ENCODE measurements at regions of chr4 and their contacts with region 1.

Region 1: DNA sequence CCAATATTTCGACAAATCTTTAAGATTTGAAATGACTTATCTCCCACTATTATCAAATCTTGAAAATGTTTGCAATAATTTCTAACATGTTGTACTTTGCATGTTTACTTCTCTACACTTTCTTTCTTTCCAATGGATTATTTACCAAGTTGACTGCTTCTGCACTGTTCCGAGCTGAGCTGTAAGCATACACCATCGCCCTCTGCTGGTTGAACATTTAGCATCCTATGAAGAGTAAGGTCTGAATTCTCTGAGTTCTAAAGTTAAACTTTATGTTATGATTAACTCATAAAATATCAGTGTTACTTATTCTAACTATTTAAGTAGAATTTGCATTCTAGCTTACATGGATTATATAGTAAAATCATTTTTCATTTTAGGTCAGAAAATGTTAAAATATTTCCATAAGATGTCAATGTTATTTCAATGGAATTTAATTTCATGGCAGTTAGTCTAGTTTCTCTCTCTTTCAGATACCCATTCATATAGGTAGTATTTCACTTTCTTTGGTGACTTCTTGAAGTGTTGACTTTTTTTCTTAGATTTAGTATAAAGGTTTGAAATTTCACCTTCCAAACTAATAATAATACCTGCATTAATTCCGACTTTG is 137.4 kb downstream of the DKK2 start:
- DNase-seq: peak; percentile 49
- H3K4me3 Mint-ChIP-seq: no peak overlapping the region
- H3K27ac Mint-ChIP-seq: no peak overlapping the region
- H3K4me1 Mint-ChIP-seq: no peaks in the 10 kb centered on the region
- H3K27me3 Mint-ChIP-seq: no peaks in the 10 kb centered on the region

Region 2: DNA sequence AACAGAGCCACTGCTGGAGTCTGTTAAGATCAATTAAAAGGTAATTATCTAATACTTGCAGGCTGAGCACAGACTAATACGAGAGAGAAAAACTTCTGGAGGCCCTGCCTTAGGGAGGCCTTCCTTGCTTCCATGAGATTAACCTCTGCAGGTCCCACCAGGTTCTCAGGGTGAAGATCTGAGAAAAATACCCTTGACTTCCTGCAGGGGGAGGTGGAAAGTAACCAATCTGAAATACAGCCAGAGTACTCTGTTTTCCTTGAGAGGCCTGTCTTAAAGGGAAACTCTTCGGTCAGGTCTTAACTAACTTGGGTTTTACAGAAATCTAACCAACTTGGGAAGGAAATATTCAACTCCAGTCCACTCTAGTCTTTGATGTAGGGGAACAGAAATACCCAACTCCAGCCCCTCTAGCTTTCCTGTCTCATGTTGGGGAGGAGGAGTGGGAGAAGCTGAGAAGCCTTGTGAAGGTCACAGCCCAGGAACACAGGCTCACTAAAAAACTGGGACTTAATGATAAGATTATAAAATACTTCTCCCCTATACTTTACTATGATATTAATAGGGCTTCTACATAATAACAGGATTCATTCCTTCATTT is 659.8 kb before region 1 on chr4:
- CTCF ChIA-PET with region 1: no interaction called
- intact Hi-C with region 1: loop called (anchors 1 kb)
- DNase-seq: no peak
- H3K4me3 Mint-ChIP-seq: no peak overlapping the region
- H3K27ac Mint-ChIP-seq: no peak overlapping the region
- H3K4me1 Mint-ChIP-seq: no peaks in the 10 kb centered on the region
- H3K27me3 Mint-ChIP-seq: no peaks in the 10 kb centered on the region

Region 3: DNA sequence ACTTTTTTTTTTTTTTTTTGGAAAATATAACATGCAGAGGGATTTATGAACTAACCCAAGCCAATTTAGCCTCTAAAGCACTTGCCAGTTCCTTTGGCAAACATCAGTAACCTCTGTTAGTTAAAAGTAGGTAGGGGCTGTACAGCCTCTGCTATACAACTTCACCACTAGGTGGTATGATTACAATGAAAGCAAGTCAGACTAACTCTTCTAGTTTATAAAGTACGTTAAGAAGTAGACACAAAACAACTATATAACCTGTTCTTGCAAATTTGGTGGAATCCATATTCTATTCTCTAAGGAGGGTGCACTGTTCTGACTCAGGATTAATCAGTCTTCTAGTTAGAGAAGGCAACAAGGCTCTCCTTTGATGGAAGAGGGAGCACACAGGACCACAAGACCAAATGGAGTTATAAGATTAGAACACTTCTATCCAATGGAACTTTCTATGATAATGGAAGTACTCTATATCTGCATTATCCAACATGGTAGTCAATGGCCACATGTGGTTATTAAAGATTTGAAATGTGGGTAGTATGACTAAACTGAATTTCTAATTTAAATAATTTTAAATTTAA is 569.6 kb before region 1 on chr4:
- CTCF ChIA-PET with region 1: no interaction called
- intact Hi-C with region 1: loop called (anchors 1 kb)
- DNase-seq: no peak
- H3K4me3 Mint-ChIP-seq: no peak overlapping the region
- H3K27ac Mint-ChIP-seq: no peak overlapping the region
- H3K4me1 Mint-ChIP-seq: peaks cover 7% of the 10 kb centered on the region
- H3K27me3 Mint-ChIP-seq: no peaks in the 10 kb centered on the region

Region 4: DNA sequence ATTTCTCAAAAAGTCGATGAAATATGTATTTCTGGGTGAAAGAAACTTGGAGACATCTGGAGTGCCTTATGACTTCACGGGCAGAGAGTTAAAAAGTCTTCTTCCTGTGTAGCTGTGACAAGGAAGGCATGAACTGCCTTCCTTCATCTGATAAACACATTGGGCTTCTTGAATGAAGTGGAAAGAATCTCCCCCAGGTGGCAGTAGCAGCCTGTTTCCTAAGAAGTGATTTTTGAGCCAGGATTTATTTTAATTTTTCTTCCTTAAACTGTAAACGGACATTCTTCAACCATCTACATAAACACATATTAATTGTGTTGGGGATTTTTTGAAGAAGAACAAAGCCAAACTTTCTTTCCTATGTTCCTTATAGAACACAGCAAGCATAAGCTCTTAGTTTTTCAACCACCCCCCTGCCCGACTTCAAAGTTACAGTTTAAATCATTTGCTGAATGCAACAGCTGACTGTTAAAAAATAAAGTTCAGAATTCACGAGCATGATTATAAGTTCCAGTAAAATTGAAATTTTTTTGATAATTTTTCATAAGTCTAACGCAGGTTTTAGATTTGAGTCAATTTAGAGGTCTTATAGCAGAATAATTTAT is 529.2 kb before region 1 on chr4:
- CTCF ChIA-PET with region 1: no interaction called
- intact Hi-C with region 1: loop called (anchors 1 kb)
- DNase-seq: peak; percentile 41
- H3K4me3 Mint-ChIP-seq: no peak overlapping the region
- H3K27ac Mint-ChIP-seq: no peak overlapping the region
- H3K4me1 Mint-ChIP-seq: no peaks in the 10 kb centered on the region
- H3K27me3 Mint-ChIP-seq: peaks cover 22% of the 10 kb centered on the region

Region 5: GRCh38 chr4:106551724-106552123 is 347.0 kb before region 1 on chr4:
- CTCF ChIA-PET with region 1: no interaction called
- intact Hi-C with region 1: no loop called
- DNase-seq: no peak
- H3K4me3 Mint-ChIP-seq: no peak overlapping the region
- H3K27ac Mint-ChIP-seq: no peak overlapping the region
- H3K4me1 Mint-ChIP-seq: no peaks in the 10 kb centered on the region
- H3K27me3 Mint-ChIP-seq: no peaks in the 10 kb centered on the region